B cell (primary cell): ENCODE measurements at regions of chr20 and their contacts with region 1.

Region 1: DNA sequence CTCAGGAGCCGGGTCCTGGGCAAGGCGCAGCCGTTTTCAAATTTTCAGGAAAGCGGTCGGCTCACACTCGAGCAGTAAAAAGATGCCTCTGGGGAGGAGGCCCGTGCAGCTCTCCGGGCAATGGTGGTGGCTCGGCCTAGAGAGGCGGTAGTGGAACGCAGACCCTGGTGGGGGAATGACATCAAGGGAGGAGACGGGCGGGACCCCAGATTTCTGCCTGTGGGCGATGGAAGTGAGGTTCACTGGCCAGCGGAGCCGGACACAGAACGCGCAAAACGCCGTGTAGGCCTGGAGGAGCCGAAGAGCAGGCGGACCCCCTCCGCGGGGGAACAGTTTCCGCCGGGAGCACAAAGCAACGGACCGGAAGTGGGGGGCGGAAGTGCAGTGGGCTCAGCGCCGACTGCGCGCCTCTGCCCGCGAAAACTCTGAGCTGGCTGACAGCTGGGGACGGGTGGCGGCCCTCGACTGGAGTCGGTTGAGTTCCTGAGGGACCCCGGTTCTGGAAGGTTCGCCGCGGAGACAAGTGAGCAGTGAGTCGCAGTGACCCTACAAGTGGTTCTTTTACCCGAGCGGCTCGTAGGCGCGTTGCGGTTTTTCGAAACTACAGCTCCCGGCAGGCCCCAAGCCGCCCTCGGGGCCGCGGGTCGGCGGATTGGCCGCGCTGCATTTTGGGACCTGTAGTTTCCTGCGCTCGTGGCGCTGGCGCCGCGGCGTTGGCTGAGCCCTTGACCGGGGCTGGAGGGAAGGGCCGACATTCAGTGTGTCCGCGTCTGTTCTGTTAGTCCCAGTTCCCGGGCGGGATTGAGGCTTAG is at the start of gene RTEL1:
- DNase-seq: peak; percentile 95
- ATAC-seq: peak; percentile 91
- H3K4me3 ChIP-seq: peak within 1 kb of the TSS; percentile 51 to 94 (median 84)
- H3K4me3 Mint-ChIP-seq: peak within 1 kb of the TSS; percentile 98
- H3K27ac ChIP-seq: peak within 1 kb of the TSS; percentile 47 to 70
- H3K27ac Mint-ChIP-seq: peak within 1 kb of the TSS; percentile 96
- H3K4me1 ChIP-seq: peaks cover 21 to 36% of the 10 kb centered on the region in 2 donors
- H3K4me1 Mint-ChIP-seq: peaks cover 21% of the 10 kb centered on the region
- H3K27me3 ChIP-seq: peaks cover 0 to 28% (median 10%) of the 10 kb centered on the region in 4 experiments
- H3K27me3 Mint-ChIP-seq: no peaks in the 10 kb centered on the region
- CTCF ChIP-seq: no peak
- total RNA-seq, gene RTEL1: 32.6 and 35.3 TPM in 2 replicates

Region 2: GRCh38 chr20:63641792-63642544 is 16.2 kb before region 1 on chr20:
- CTCF ChIA-PET with region 1: interaction called, 17 read pairs
- POLR2A ChIA-PET with region 1: interaction called, 19 read pairs
- intact Hi-C with region 1: loop called (anchors 1 kb)
- DNase-seq: peak; percentile 96
- ATAC-seq: peak; percentile 72
- H3K4me3 ChIP-seq: peak overlapping the region in 4 of 5 experiments; percentile 84 to 97 (median 90)
- H3K4me3 Mint-ChIP-seq: peak overlapping the region; percentile 82
- H3K27ac ChIP-seq: peak overlapping the region; percentile 91
- H3K27ac Mint-ChIP-seq: peak overlapping the region; percentile 97
- H3K4me1 ChIP-seq: peaks cover 23 to 41% of the 10 kb centered on the region in 2 donors
- H3K4me1 Mint-ChIP-seq: peaks cover 28% of the 10 kb centered on the region
- H3K27me3 ChIP-seq: no peaks in the 10 kb centered on the region
- H3K27me3 Mint-ChIP-seq: peaks cover 4% of the 10 kb centered on the region
- CTCF ChIP-seq: peak; percentile 67

Region 3: DNA sequence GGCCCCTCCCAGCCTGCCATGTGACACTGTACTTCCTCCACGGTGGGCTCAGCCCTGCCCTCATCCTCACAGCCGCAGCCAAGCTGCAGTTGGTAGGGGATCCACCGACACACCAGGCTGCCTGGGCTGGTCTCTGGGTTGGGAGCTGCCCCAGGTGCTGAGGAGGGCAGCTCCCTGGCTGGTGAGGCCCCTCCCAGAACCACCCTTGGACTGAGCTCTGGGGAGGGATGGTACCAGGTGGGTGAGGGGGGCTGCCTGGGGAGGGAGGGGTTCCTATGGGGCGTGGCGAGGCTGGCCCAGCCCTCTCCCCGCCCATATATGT is 38.1 kb after region 1 on chr20:
- CTCF ChIA-PET with region 1: no interaction called
- POLR2A ChIA-PET with region 1: no interaction called
- intact Hi-C with region 1: no loop called
- DNase-seq: peak; percentile 55
- ATAC-seq: peak; percentile 68
- H3K4me3 ChIP-seq: peak overlapping the region in 3 of 5 experiments; percentile 13 to 33 (median 23)
- H3K4me3 Mint-ChIP-seq: peak overlapping the region; percentile 27
- H3K27ac ChIP-seq: no peak overlapping the region
- H3K27ac Mint-ChIP-seq: peak overlapping the region; percentile 41
- H3K4me1 ChIP-seq: peaks cover 18% of the 10 kb centered on the region in 2 donors
- H3K4me1 Mint-ChIP-seq: peaks cover 16% of the 10 kb centered on the region
- H3K27me3 ChIP-seq: peaks cover 0 to 3% (median 0%) of the 10 kb centered on the region in 4 experiments
- H3K27me3 Mint-ChIP-seq: no peaks in the 10 kb centered on the region
- CTCF ChIP-seq: no peak

Region 4: DNA sequence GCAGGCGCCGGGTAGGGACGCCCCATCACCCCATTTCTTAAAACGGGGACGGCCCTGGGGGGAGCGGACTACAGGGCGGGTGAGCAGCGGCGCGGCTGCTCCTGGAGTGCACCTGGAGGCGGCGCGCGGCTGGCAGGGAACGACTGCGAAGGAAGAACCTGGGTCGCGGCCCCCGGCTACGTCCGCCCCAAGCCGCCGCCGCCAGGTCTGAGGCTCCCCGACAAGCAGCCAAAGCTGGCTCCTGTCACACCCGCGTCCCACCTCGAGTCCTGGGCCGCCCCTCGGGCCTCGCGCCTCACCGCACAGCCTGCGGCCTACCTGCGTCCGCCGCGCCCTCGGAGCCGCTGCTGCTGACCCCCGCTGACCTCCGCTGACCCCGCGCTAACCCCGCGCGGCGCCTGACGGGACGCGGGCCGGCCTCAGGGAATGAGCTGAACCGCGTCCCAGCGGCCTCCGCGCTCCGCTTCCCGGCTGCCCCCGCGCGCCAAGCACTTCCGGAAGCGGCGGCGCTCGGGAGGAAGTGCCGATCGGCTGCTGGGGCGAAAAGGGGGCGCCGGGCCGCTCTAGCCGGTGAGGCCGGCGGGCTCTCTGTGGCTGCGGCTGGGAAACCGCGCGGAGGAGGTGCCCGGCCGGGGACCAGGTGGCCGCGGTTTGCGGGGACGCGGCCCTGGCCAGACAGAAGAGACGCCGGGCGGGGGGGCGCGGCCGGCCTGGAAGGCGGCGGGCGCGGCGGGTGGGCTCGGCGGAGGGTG is 49.6 kb after region 1 on chr20 and contains the starts of genes ARFRP1 and ZGPAT:
- CTCF ChIA-PET with region 1: interaction called, 4 read pairs
- POLR2A ChIA-PET with region 1: interaction called, 13 read pairs
- intact Hi-C with region 1: loop called (anchors 1 kb)
- DNase-seq: peak; percentile 92
- ATAC-seq: peak; percentile 96
- H3K4me3 ChIP-seq: peak within 1 kb of the TSS in 4 of 5 experiments; percentile 63 to 80 (median 67)
- H3K4me3 Mint-ChIP-seq: peak within 1 kb of the TSS; percentile 87
- H3K27ac ChIP-seq: peak within 1 kb of the TSS; percentile 63 to 85
- H3K27ac Mint-ChIP-seq: peak within 1 kb of the TSS; percentile 86
- H3K4me1 ChIP-seq: peaks cover 21 to 28% of the 10 kb centered on the region in 2 donors
- H3K4me1 Mint-ChIP-seq: peaks cover 38% of the 10 kb centered on the region
- H3K27me3 ChIP-seq: no peaks in the 10 kb centered on the region
- H3K27me3 Mint-ChIP-seq: no peaks in the 10 kb centered on the region
- CTCF ChIP-seq: no peak
- total RNA-seq, gene ARFRP1: 73.3 and 75.5 TPM in 2 replicates
- total RNA-seq, gene ZGPAT: 46.1 and 47.5 TPM in 2 replicates

Region 5: DNA sequence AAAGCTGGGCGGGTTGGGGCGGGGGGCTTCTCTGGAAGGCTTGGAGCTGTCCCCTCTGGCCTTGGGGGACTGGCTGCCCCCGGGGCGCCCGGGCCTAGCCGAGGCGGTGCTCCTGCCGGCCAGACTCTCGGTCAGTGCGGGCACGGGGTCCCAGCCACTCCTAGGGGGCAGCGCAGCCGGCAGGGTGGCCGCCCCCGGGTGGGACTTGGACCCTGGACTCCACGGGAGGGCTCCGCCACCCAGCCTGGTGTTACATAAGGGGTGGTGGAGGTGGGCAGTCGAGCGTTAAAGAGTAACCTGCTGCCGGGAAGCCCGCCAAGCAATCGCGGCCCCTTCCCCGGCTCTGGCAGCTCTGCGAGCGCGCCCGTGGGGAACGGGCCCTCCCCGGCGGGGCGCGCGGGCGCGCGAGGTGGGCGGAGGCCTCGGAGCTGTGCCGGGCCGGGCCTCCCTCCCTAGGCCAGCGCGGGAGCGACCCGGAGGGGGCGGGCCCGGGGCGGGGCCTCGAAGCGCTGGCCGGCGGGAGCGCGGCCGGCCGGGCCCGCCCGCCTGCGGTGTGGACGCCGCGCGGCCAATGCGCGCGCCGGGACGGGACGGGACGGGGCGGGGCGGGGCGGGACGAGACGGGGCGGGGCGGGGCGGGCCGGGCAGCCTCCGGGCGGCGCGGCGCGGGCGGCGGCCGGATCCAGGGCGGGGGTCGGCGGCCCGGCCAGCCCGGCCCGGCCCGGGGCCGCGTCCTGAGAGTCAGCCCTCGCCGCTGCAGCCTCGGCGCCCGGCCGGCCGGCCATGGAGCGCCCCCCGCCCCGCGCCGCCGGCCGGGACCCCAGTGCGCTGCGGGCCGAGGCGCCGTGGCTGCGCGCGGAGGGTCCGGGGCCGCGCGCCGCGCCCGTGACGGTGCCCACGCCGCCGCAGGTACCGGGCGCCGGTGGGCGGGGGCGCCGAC is 81.3 kb after region 1 on chr20 and contains the start of gene SLC2A4RG:
- CTCF ChIA-PET with region 1: no interaction called
- POLR2A ChIA-PET with region 1: interaction called, 4 read pairs
- intact Hi-C with region 1: loop called (anchors 2 kb)
- DNase-seq: peak; percentile 79
- ATAC-seq: peak; percentile 71
- H3K4me3 ChIP-seq: peak within 1 kb of the TSS; percentile 23 to 64 (median 50)
- H3K4me3 Mint-ChIP-seq: peak within 1 kb of the TSS; percentile 80
- H3K27ac ChIP-seq: no peak within 1 kb of the TSS
- H3K27ac Mint-ChIP-seq: no peak within 1 kb of the TSS
- H3K4me1 ChIP-seq: peaks cover 35 to 46% of the 10 kb centered on the region in 2 donors
- H3K4me1 Mint-ChIP-seq: peaks cover 18% of the 10 kb centered on the region
- H3K27me3 ChIP-seq: no peaks in the 10 kb centered on the region
- H3K27me3 Mint-ChIP-seq: no peaks in the 10 kb centered on the region
- CTCF ChIP-seq: no peak
- total RNA-seq, gene SLC2A4RG: 49.4 and 50.8 TPM in 2 replicates

Region 6: DNA sequence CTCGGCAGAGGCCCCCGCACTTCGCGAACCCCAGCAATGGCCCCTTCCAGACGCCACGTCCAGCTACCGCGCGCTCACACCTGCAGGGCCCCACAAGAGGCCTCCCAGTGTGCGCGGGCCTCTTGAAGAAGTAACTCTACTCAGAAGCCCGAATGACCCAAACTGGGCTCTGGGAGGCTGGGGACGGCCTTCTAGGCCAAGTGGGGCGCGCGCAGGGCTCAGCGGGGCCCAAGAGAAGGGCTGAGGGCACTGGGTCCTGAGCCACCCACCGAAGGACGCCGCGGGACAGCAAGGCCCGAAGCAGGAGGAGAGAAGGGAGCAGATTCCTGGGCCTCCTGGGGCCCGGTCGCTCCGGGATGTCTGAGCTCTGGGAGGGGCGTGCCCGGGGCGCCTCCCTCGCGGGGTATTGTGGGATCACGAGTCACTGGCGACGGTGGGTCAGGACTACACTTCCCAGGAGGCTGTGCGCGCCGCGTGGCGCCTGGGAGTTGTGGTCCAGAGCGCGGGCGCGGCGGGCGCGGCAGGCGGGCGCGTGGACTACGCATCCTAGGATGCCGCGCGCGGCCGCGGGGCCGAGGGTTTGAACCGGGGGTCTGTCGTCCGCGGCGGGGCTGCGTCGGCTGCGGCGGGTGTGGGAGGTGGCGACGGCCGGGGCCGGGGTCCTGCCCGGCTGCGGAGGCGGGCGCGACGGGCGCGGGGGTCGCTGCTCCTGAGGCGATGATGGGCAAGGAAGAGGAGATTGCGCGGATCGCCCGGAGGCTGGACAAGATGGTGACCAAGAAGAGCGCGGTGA is 404.6 kb after region 1 on chr20 and contains the start of gene TCEA2:
- CTCF ChIA-PET with region 1: no interaction called
- POLR2A ChIA-PET with region 1: no interaction called
- intact Hi-C with region 1: loop called (anchors 5 kb)
- DNase-seq: peak; percentile 93
- ATAC-seq: peak; percentile 83
- H3K4me3 ChIP-seq: peak within 1 kb of the TSS in 4 of 5 experiments; percentile 63 to 79 (median 70)
- H3K4me3 Mint-ChIP-seq: peak within 1 kb of the TSS; percentile 88
- H3K27ac ChIP-seq: peak within 1 kb of the TSS; percentile 34 to 69
- H3K27ac Mint-ChIP-seq: peak within 1 kb of the TSS; percentile 86
- H3K4me1 ChIP-seq: peaks cover 54 to 63% of the 10 kb centered on the region in 2 donors
- H3K4me1 Mint-ChIP-seq: peaks cover 52% of the 10 kb centered on the region
- H3K27me3 ChIP-seq: no peaks in the 10 kb centered on the region
- H3K27me3 Mint-ChIP-seq: no peaks in the 10 kb centered on the region
- CTCF ChIP-seq: no peak
- total RNA-seq, gene TCEA2: 49.3 and 58.1 TPM in 2 replicates